CD4-positive, alpha-beta memory T cell (primary cell): ENCODE measurements at regions of chr22 and their contacts with region 1.

Region 1: GRCh38 chr22:30920407-30920806 is 48.2 kb downstream of the MORC2 start:
- DNase-seq: peak; percentile 71 to 78 (median 77)
- H3K4me3 ChIP-seq: no peak overlapping the region
- H3K4me3 Mint-ChIP-seq: peak overlapping the region; percentile 69 to 86 (median 76)
- H3K27ac ChIP-seq: no peak overlapping the region
- H3K27ac Mint-ChIP-seq: peak overlapping the region in 5 of 7 donors; percentile 5 to 80 (median 73)
- H3K4me1 ChIP-seq: peaks cover 23% of the 10 kb centered on the region
- H3K4me1 Mint-ChIP-seq: peaks cover 7 to 20% (median 14%) of the 10 kb centered on the region in 4 donors
- H3K27me3 ChIP-seq: no peaks in the 10 kb centered on the region
- H3K27me3 Mint-ChIP-seq: no peaks in the 10 kb centered on the region

Region 2: DNA sequence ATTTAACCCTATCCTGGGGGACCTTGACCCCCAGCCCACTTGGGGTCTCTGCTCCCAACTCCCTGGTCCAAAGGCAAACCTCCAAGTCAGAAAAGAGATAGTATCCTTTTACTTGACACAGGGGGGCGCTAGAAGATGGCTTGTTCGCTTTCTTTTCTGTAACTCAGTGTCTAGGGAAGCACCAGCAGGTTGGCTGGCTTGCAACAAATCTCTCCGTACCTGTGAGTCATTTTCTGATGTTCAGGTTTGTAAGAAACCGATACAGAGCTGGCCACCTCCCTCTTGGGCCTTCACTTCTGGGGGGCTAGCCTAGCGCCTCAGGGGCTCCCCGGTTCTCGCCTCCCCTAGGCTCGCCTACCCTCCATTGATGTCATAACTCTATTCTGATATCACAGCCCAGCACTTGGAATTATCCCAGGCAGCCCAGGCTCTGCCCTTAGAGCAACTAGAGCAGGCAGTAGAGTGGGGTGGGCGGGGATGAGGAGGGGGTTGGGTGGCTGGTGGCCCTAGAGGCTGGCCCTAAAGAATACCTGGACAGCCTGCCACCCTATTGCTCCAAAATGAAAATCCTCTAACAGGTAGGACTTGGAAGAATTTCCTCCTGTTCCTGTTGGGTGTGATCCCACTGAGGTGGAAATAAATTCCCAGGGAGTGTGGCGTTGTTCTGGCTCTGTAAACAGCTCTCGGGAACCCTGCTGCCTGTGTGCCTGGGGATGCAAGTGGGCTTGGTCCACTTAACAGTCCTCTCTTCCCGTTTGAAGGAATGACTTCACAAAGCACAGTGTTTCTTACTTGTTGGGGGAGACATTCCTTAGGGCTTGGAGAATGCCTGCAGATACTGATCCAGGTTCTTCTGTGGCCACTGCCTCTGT is 156.4 kb before region 1 on chr22:
- CTCF ChIA-PET with region 1: interaction called, 10 read pairs
- POLR2A ChIA-PET with region 1: no interaction called
- intact Hi-C with region 1: no loop called
- DNase-seq: peak; percentile 52 to 67 (median 57)
- H3K4me3 ChIP-seq: no peak overlapping the region
- H3K4me3 Mint-ChIP-seq: no peak overlapping the region
- H3K27ac ChIP-seq: no peak overlapping the region
- H3K27ac Mint-ChIP-seq: no peak overlapping the region
- H3K4me1 ChIP-seq: no peaks in the 10 kb centered on the region
- H3K4me1 Mint-ChIP-seq: no peaks in the 10 kb centered on the region
- H3K27me3 ChIP-seq: no peaks in the 10 kb centered on the region
- H3K27me3 Mint-ChIP-seq: no peaks in the 10 kb centered on the region

Region 3: DNA sequence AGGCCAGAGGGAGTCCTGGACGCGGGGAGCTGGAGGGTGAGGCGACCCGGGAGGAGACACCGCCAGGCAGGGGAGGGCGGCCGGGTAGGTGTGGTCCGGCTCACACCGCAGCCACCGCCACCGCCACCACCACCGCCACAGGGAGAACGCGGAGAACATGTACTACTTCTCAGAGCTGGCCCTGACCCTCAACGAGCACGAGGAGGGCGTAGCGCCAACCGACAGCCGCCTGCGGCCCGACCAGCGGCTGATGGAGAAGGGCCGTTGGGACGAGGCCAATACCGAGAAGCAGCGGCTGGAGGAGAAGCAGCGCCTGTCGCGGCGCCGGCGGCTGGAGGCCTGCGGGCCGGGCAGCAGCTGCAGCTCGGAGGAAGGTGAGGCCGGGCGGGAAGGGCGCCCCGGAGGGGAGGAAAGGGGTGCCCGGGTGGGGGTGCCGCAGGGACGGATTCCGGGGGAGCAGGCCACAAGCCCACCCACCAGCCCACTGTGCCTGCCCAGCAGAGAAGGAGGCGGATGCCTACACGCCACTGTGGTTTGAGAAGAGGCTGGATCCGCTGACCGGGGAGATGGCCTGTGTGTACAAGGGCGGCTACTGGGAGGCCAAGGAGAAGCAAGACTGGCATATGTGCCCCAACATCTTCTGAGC is 14.6 kb before region 1 on chr22:
- CTCF ChIA-PET with region 1: interaction called, 14 read pairs
- POLR2A ChIA-PET with region 1: no interaction called
- intact Hi-C with region 1: no loop called
- DNase-seq: no peak
- H3K4me3 ChIP-seq: no peak overlapping the region
- H3K4me3 Mint-ChIP-seq: no peak overlapping the region
- H3K27ac ChIP-seq: no peak overlapping the region
- H3K27ac Mint-ChIP-seq: no peak overlapping the region
- H3K4me1 ChIP-seq: no peaks in the 10 kb centered on the region
- H3K4me1 Mint-ChIP-seq: peaks cover 3 to 5% (median 4%) of the 10 kb centered on the region in 4 donors
- H3K27me3 ChIP-seq: no peaks in the 10 kb centered on the region
- H3K27me3 Mint-ChIP-seq: no peaks in the 10 kb centered on the region

Region 4: DNA sequence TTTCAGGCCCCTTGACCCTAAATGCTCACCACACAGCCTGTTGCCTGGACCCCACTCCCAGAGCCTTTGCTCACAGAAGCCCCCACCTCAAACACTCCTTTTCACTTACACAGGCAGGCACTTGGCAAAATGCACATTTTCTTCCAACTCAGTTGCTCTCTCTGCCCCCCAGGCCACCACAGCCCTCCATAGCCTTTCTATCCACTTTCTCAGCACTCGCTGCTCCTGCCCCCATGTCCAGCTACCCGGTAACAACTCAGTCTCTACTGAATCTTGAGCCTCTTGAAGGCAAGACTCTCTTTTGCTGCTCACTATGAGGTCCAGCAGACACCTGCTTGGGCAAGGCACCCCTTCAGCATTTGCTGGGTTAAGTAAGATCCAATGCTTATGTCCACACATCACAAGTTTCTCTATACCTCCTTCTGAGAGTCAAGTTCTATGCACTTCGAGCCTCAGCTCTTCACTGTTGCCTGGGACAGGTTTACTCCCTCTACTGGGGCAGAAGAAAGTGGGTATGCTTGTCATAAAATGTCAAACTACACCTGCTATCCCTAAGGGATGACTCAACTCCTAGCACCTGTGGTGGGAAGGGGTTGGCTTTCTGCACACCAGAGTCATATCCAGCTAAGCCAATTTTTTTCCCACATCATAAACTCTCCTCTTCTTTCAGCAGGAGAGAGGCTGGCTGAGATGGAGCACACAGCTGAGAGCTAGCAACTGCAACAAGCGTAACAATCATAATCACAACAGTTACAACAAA is 11.3 kb after region 1 on chr22:
- CTCF ChIA-PET with region 1: interaction called, 95 read pairs
- POLR2A ChIA-PET with region 1: interaction called, 80 read pairs
- intact Hi-C with region 1: no loop called
- DNase-seq: no peak
- H3K4me3 ChIP-seq: no peak overlapping the region
- H3K4me3 Mint-ChIP-seq: peak overlapping the region in 1 of 8 donors; percentile 20
- H3K27ac ChIP-seq: peak overlapping the region; percentile 14
- H3K27ac Mint-ChIP-seq: peak overlapping the region; percentile 75 to 96 (median 89)
- H3K4me1 ChIP-seq: peaks cover 19% of the 10 kb centered on the region
- H3K4me1 Mint-ChIP-seq: peaks cover 23 to 49% (median 42%) of the 10 kb centered on the region in 4 donors
- H3K27me3 ChIP-seq: no peaks in the 10 kb centered on the region
- H3K27me3 Mint-ChIP-seq: no peaks in the 10 kb centered on the region

Region 5: GRCh38 chr22:30940685-30941362 is 20.4 kb after region 1 on chr22:
- CTCF ChIA-PET with region 1: interaction called, 95 read pairs
- POLR2A ChIA-PET with region 1: interaction called, 80 read pairs
- intact Hi-C with region 1: loop called (anchors 2 kb)
- DNase-seq: peak; percentile 49 to 66 (median 60)
- H3K4me3 ChIP-seq: peak overlapping the region; percentile 48 to 63
- H3K4me3 Mint-ChIP-seq: peak overlapping the region; percentile 86 to 94 (median 90)
- H3K27ac ChIP-seq: peak overlapping the region; percentile 57
- H3K27ac Mint-ChIP-seq: peak overlapping the region; percentile 89 to 97 (median 94)
- H3K4me1 ChIP-seq: peaks cover 88% of the 10 kb centered on the region
- H3K4me1 Mint-ChIP-seq: peaks cover 57 to 96% (median 77%) of the 10 kb centered on the region in 4 donors
- H3K27me3 ChIP-seq: no peaks in the 10 kb centered on the region
- H3K27me3 Mint-ChIP-seq: no peaks in the 10 kb centered on the region

Region 6: DNA sequence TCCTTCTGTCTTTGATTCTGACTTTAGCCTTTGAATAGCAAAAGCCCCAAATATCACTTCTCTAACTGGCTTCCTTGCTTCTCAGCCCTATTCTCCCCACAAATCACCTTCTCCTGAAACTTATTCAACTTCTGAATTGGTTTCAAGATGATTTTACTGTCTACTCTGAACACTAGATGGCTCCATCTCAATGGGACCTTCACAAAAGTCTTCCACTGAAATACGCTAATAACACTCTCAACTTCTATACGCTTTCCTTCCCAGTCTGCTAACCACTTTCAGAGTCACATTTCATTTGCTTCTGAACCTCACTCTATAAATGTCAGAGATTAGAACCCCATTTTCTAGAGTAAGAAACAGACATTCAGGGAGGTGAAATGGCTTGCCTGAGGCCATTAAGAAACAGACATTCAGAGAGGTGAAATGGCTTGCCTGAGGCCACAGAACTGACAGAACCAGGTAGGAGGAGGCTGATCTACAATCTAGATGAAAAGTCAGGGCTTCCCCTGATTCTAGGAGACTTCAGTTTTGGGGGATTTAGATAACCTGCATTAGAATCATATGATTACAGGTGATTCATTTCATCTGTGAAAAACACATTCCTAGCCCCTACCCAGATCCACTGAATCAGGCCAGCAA is 27.5 kb after region 1 on chr22:
- CTCF ChIA-PET with region 1: interaction called, 95 read pairs
- POLR2A ChIA-PET with region 1: interaction called, 80 read pairs
- intact Hi-C with region 1: no loop called
- DNase-seq: peak in 4 of 5 donors; percentile 34 to 46 (median 39)
- H3K4me3 ChIP-seq: no peak overlapping the region
- H3K4me3 Mint-ChIP-seq: no peak overlapping the region
- H3K27ac ChIP-seq: no peak overlapping the region
- H3K27ac Mint-ChIP-seq: no peak overlapping the region
- H3K4me1 ChIP-seq: peaks cover 33% of the 10 kb centered on the region
- H3K4me1 Mint-ChIP-seq: peaks cover 31 to 50% (median 45%) of the 10 kb centered on the region in 4 donors
- H3K27me3 ChIP-seq: no peaks in the 10 kb centered on the region
- H3K27me3 Mint-ChIP-seq: no peaks in the 10 kb centered on the region